Caco-2 (cell line): ENCODE measurements at regions of chr12 and their contacts with region 1.

Region 1: DNA sequence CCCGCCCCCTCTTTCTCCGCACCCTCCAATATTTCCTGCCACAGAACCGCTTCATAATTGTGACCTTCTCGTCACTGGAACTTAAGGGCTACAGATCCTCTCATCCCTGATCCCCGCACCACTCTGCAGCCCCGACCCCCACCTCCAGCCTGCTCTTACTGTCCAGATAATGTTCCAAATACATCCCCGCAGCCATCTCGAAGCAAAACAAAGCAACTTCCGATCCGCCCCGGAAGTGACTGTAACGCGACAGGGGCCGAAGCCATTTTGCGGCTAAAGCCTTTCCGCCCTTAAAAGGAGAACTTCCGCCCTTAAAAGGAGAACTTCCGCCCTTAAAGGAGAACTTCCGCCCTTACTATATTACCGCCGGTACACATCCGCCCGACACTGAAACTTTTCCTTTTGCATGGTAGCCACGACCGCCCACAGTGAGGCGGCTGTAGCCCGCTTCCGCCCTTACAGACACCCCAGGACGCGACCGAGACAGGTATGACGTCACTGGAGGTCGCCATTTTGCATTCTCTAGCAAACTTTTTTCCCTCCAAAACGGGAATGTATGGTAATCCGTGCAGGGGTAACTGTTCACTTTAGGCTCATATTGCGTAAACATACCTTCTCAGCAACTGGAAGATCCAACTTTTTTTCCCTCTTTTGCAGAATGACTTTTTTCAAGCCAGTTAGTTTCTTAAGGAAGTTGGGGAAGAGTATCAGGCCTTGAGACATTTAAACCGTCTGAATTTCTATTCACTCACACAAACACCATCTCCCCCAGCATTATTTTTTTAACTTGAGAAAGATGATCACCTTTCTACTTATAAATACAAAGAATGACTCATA is at the start of gene ING4:
- DNase-seq: peak; percentile 99 to 100
- H3K4me3 ChIP-seq: peak within 1 kb of the TSS; percentile 60
- H3K4me3 Mint-ChIP-seq: peak within 1 kb of the TSS; percentile 79
- H3K27ac Mint-ChIP-seq: peak within 1 kb of the TSS; percentile 83
- H3K4me1 ChIP-seq: peaks cover 12% of the 10 kb centered on the region; the same call in 1 of the 2 replicates
- H3K4me1 Mint-ChIP-seq: peaks cover 14% of the 10 kb centered on the region
- H3K27me3 ChIP-seq: no peaks in the 10 kb centered on the region
- H3K27me3 Mint-ChIP-seq: no peaks in the 10 kb centered on the region
- CTCF ChIP-seq: peak in 1 of 2 experiments; percentile 0
- total RNA-seq, gene ING4: 31.6 and 32.8 TPM in 2 replicates

Region 2: GRCh38 chr12:6443361-6443983 is 219.7 kb before region 1 on chr12:
- CTCF ChIA-PET with region 1: no interaction called
- POLR2A ChIA-PET with region 1: no interaction called
- intact Hi-C with region 1: no loop called
- DNase-seq: no peak
- H3K4me3 ChIP-seq: no peak overlapping the region
- H3K4me3 Mint-ChIP-seq: no peak overlapping the region
- H3K27ac Mint-ChIP-seq: no peak overlapping the region
- H3K4me1 ChIP-seq: no peaks in the 10 kb centered on the region
- H3K4me1 Mint-ChIP-seq: no peaks in the 10 kb centered on the region
- H3K27me3 ChIP-seq: no peaks in the 10 kb centered on the region
- H3K27me3 Mint-ChIP-seq: no peaks in the 10 kb centered on the region
- CTCF ChIP-seq: no peak

Region 3: DNA sequence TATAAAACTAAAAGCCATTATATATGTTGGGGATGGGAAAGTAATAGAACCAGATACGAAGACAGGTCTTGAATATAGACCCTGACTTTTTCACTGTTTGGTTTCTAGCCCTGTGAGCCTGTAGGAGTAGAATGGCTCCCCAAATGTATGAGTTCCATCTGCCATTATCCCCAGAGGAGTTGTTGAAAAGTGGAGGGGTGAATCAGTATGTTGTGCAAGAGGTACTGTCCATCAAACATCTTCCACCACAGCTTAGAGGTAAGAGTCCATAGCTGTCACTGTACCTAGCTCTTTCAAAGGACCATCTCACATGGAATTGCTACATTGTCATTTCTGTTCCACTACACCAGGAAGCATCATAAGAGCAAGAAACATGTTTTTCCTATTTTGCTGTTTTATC is 168.2 kb before region 1 on chr12:
- CTCF ChIA-PET with region 1: no interaction called
- POLR2A ChIA-PET with region 1: no interaction called
- intact Hi-C with region 1: no loop called
- DNase-seq: no peak
- H3K4me3 ChIP-seq: peak overlapping the region; percentile 57
- H3K4me3 Mint-ChIP-seq: peak overlapping the region; percentile 92
- H3K27ac Mint-ChIP-seq: peak overlapping the region; percentile 96
- H3K4me1 ChIP-seq: peaks cover 12% of the 10 kb centered on the region
- H3K4me1 Mint-ChIP-seq: peaks cover 10% of the 10 kb centered on the region
- H3K27me3 ChIP-seq: no peaks in the 10 kb centered on the region
- H3K27me3 Mint-ChIP-seq: no peaks in the 10 kb centered on the region
- CTCF ChIP-seq: no peak

Region 4: GRCh38 chr12:6547987-6548386 is 115.1 kb before region 1 on chr12:
- CTCF ChIA-PET with region 1: no interaction called
- POLR2A ChIA-PET with region 1: no interaction called
- intact Hi-C with region 1: no loop called
- DNase-seq: peak in 1 of 2 experiments; percentile 61
- H3K4me3 ChIP-seq: no peak overlapping the region
- H3K4me3 Mint-ChIP-seq: no peak overlapping the region
- H3K27ac Mint-ChIP-seq: peak overlapping the region; percentile 57
- H3K4me1 ChIP-seq: peaks cover 23% of the 10 kb centered on the region
- H3K4me1 Mint-ChIP-seq: peaks cover 16% of the 10 kb centered on the region
- H3K27me3 ChIP-seq: no peaks in the 10 kb centered on the region
- H3K27me3 Mint-ChIP-seq: no peaks in the 10 kb centered on the region
- CTCF ChIP-seq: no peak

Region 5: GRCh38 chr12:6563448-6564050 is 99.6 kb before region 1 on chr12:
- CTCF ChIA-PET with region 1: no interaction called
- POLR2A ChIA-PET with region 1: interaction called, 4 read pairs
- intact Hi-C with region 1: loop called (anchors 1 kb)
- DNase-seq: peak; percentile 63 to 80
- H3K4me3 ChIP-seq: no peak overlapping the region
- H3K4me3 Mint-ChIP-seq: no peak overlapping the region
- H3K27ac Mint-ChIP-seq: no peak overlapping the region
- H3K4me1 ChIP-seq: no peaks in the 10 kb centered on the region
- H3K4me1 Mint-ChIP-seq: peaks cover 9% of the 10 kb centered on the region
- H3K27me3 ChIP-seq: no peaks in the 10 kb centered on the region
- H3K27me3 Mint-ChIP-seq: no peaks in the 10 kb centered on the region
- CTCF ChIP-seq: peak; percentile 89 to 96